ENCODE measurements at regions of chr9 and their contacts with region 1.

Region 1: DNA sequence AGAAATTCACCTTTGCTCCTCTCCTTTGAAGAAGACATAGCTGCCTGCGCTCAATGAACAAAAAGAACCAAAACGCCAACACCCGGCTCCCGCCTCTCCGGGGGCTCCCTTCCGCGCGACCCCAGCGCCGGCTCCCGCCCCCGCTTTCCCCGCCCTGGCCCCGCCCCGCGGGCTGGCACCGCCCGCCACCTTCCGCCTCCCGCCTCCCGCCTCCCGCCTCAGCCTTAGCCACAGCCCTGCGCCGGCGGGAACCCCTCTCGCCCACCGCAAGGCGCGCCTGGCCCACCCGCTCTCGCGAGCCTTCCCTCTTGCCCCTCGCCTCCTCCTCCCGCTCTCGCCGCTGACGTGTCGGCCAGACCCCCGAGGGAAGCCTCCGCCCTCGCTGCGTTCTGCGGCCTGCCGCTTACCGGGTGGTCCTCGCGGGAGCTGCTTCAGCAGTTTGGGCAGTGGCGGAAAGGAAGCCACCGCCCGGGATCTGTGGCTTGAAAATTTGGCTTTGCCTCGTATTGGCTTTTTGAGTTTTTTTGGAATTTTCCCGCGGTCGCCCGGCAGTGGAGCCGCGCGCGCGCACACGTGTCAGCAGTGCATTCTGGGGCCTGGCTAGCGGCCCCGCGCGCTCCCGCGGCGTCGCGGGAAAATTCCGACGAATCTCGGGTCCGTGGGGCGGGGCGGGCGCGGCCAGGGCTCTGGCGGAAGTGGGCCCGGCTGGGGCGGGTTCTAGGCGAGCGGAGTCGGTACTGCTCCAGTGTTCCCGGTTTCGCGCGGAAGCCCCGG is at the start of gene FANCC:
- DNase-seq: peak; percentile 96 to 99 (median 98)
- ATAC-seq: peak; percentile 97 to 98
- H3K4me3 ChIP-seq: peak within 1 kb of the TSS; percentile 80
- H3K27ac ChIP-seq: peak within 1 kb of the TSS; percentile 83
- H3K4me1 ChIP-seq: no peaks in the 10 kb centered on the region
- H3K27me3 ChIP-seq: no peaks in the 10 kb centered on the region
- total RNA-seq, gene FANCC: 3.3 to 6.6 (median 4.5) TPM

Region 2: DNA sequence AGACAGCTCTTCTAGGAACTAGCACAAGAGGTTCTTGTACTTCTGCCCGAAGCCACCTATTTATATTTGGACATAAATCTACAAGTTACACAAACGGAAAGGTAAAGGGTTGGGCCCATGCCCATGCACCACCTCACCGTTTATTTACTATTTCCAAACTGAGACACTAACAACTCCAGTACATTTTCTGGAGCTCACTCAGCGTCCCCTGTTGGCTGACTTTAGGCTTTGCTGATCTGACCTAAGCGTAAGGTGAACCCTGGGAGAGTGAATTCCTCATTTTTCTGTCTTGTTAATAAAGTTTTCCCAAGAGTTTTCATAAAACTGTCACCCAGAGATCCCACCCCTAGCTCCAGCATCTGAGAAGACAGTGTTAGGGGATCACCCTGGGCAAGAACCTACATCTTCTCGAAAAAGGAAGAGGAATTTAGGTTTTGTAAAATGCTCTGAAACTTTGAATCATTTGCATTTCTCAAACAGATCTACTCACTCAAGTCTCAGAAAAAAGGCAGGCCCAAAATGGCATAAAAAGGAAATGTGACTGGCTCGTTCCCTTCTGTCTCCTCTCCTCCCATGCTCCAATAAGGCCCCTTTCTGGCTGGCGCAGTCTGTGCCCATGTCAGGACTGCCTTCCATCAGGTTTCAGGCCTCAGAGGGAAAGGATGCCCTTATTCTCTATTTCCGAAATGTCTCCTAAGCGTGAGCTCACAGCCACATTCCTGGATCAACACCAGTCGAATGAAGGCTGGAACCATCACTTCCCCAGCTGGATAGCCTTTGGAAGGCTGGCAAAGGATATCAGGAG is 201.1 kb before region 1 on chr9:
- intact Hi-C with region 1: no loop called
- DNase-seq: no peak
- ATAC-seq: peak; percentile 4 to 34
- H3K4me3 ChIP-seq: no peak overlapping the region
- H3K27ac ChIP-seq: no peak overlapping the region
- H3K4me1 ChIP-seq: peaks cover 4% of the 10 kb centered on the region
- H3K27me3 ChIP-seq: no peaks in the 10 kb centered on the region

Region 3: DNA sequence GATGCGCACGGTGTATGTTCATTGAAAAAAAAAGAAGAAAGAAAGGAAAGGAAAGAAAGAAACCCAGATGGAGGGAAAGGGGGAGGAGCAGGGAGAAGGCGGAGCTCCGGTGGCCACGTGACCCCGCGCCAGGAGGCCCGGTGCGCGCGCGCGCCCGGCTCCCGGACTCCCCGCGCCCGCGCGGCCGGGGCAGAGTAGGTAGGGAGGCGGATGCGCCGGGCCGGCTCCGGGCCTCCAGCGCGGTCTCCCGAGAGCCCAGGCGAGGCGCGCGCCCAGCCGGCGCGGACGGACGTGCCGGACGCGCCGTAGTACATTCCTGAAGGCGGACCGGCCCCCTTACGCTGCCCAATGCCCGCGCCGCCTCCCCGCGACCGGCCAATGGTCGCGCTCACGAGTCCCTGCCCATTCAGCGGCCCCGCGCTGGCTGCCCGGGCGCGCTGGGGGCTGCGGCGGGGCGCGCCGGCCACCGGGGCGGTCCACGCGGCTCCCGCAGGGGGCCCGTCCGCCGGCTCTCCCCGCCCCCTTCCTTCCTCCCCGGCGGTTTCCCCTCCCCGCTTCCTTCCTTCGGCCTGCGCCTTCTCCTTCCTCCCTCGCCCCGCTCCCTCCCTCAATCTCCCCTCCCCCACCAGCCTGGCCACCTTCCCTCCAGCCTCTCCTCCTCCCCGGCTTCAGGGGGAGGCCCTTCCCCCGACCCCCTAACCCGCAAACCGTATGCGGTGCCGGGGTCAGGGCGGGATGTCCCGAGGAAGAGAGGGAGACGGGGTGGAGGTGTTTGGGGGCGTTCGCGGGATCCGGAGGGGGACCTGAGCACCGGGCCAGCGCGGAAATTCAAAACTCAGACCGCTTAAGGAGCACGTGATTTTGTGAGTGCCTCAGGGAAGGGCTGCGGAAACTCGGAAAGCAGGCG is 193.7 kb after region 1 on chr9:
- intact Hi-C with region 1: loop called in 1 of 4 experiments (anchors 5 kb)
- DNase-seq: peak; percentile 90 to 96 (median 96)
- ATAC-seq: peak; percentile 85 to 86
- H3K4me3 ChIP-seq: peak overlapping the region; percentile 94
- H3K27ac ChIP-seq: peak overlapping the region; percentile 97
- H3K4me1 ChIP-seq: no peaks in the 10 kb centered on the region
- H3K27me3 ChIP-seq: no peaks in the 10 kb centered on the region